ENCODE measurements at regions of chr5 and their contacts with region 1.

Region 1: GRCh38 chr5:91311697-91312501 is 71.2 kb downstream of the ARRDC3 start:
- DNase-seq: peak; percentile 55 to 69 (median 68)
- ATAC-seq: peak; percentile 74 to 79 (median 74)
- H3K4me3 ChIP-seq: peak overlapping the region in 1 of 12 donors; percentile 23
- H3K27ac ChIP-seq: peak overlapping the region; percentile 47 to 88 (median 76)
- H3K4me1 ChIP-seq: peaks cover 0 to 61% (median 26%) of the 10 kb centered on the region in 12 donors
- H3K27me3 ChIP-seq: no peaks in the 10 kb centered on the region
- CTCF ChIP-seq: peak in 3 of 12 donors; percentile 16 to 29 (median 20)
- POLR2A ChIP-seq: no peak

Region 2: DNA sequence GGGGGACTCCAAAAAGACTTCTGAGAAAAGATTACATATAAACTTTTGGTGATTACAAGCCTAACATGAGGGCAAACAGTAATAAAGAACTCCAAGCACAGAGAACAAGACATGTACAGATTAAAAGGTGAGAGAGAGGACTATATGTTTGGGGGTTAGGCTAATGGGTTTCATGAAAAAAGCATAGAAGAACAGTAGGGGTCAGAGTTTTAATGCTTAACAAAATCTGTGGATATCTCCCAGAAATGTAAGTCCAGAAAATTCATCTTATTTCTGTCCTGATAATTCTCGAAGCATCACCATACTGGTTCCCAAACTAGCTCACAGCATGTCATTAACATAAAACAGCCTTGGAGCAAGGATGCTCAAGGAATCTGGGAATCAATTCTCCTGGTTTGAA is 66.0 kb before region 1 on chr5:
- intact Hi-C with region 1: loop called in 1 of 10 experiments (anchors 10 kb)
- DNase-seq: no peak
- ATAC-seq: no peak
- H3K4me3 ChIP-seq: no peak overlapping the region
- H3K27ac ChIP-seq: peak overlapping the region in 2 of 12 donors; percentile 39 to 66
- H3K4me1 ChIP-seq: peaks cover 0 to 11% (median 3%) of the 10 kb centered on the region in 12 donors
- H3K27me3 ChIP-seq: no peaks in the 10 kb centered on the region
- CTCF ChIP-seq: no peak
- POLR2A ChIP-seq: no peak

Region 3: GRCh38 chr5:91280362-91281269 is 31.3 kb before region 1 on chr5:
- intact Hi-C with region 1: loop called in 1 of 10 experiments (anchors 2 kb)
- DNase-seq: peak; percentile 94 to 97 (median 95)
- ATAC-seq: peak; percentile 95 to 98 (median 97)
- H3K4me3 ChIP-seq: peak overlapping the region; percentile 35 to 73 (median 62)
- H3K27ac ChIP-seq: peak overlapping the region; percentile 72 to 97 (median 93)
- H3K4me1 ChIP-seq: peaks cover 0 to 29% (median 8%) of the 10 kb centered on the region in 12 donors
- H3K27me3 ChIP-seq: no peaks in the 10 kb centered on the region
- CTCF ChIP-seq: peak in 2 of 12 donors; percentile 6 to 7
- POLR2A ChIP-seq: peak in 1 of 2 donors; percentile 50

Region 4: DNA sequence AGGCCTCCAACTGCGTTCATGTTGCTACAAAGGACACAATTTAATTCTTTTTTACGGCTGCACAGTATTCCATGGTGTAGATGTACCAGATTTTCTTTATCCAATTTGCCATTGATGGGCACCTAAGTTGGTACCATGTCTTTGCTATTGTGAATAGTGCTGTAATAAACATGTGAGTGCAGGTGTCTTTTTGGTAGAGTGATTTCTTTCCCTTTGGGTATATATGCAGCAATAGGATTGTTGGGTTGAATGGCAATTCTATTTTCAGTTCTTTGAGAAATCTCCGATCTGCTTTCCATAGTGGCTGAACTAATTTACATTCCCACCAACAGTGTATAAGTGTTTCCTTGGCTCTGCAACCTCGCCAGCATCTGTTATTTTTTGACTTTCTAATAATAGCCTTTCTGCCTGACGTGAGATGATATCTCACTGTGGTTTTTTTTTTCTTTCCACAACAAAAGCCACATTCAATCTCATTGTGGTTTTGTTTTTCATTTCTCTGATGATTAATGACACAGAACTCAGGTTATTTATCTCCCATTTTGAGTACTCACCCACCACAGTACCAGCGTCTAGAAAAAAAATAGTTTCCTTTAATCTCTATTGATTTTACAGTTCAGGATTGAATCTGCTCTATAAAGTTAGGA is 49.3 kb after region 1 on chr5:
- intact Hi-C with region 1: loop called in 2 of 10 experiments (anchors 5 to 10 kb)
- DNase-seq: no peak
- ATAC-seq: no peak
- H3K4me3 ChIP-seq: no peak overlapping the region
- H3K27ac ChIP-seq: no peak overlapping the region
- H3K4me1 ChIP-seq: peaks cover 0 to 7% (median 0%) of the 10 kb centered on the region in 12 donors
- H3K27me3 ChIP-seq: no peaks in the 10 kb centered on the region
- CTCF ChIP-seq: no peak
- POLR2A ChIP-seq: no peak

Region 5: DNA sequence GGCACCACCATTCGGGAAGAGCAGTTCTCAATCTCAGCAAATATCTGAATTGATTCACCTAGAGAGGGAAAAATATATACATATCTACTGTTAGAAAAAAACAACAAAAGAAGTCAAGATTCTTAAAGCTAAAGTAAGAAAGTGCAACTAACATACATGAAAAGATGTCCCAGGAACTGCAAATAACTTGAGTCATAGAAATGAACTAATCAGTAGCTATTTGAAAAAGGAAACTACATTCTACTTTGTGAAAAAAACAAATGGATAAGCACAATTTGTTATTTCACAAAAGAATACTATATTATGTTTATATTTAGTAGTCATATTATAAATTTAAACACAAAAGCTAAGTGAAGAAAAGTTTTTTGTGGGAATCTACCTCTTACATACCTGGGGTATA is 63.2 kb after region 1 on chr5:
- intact Hi-C with region 1: loop called in 4 of 10 experiments (anchors 1 to 5 kb)
- DNase-seq: no peak
- ATAC-seq: no peak
- H3K4me3 ChIP-seq: no peak overlapping the region
- H3K27ac ChIP-seq: peak overlapping the region in 5 of 12 donors; percentile 4 to 53 (median 32)
- H3K4me1 ChIP-seq: peaks cover 5 to 78% (median 37%) of the 10 kb centered on the region in 12 donors
- H3K27me3 ChIP-seq: no peaks in the 10 kb centered on the region
- CTCF ChIP-seq: no peak
- POLR2A ChIP-seq: no peak